ENCODE measurements at regions of chr18 and their contacts with region 1.

Region 1: GRCh38 chr18:10851824-10852319 is 297.5 kb downstream of the PIEZO2 start:
- DNase-seq: no peak
- H3K4me3 ChIP-seq: no peak overlapping the region
- H3K27ac ChIP-seq: no peak overlapping the region
- H3K4me1 ChIP-seq: no peaks in the 10 kb centered on the region
- H3K27me3 ChIP-seq: no peaks in the 10 kb centered on the region
- CTCF ChIP-seq: peak; percentile 40 to 79 (median 54)
- POLR2A ChIP-seq: no peak

Region 2: GRCh38 chr18:10682368-10682714 is 169.5 kb before region 1 on chr18:
- intact Hi-C with region 1: no loop called
- DNase-seq: no peak
- H3K4me3 ChIP-seq: no peak overlapping the region
- H3K27ac ChIP-seq: no peak overlapping the region
- H3K4me1 ChIP-seq: no peaks in the 10 kb centered on the region
- H3K27me3 ChIP-seq: no peaks in the 10 kb centered on the region
- CTCF ChIP-seq: no peak
- POLR2A ChIP-seq: no peak

Region 3: GRCh38 chr18:11040823-11041656 is 189.2 kb after region 1 on chr18:
- intact Hi-C with region 1: loop called (anchors 10 kb)
- DNase-seq: peak; percentile 79
- H3K4me3 ChIP-seq: no peak overlapping the region
- H3K27ac ChIP-seq: no peak overlapping the region
- H3K4me1 ChIP-seq: no peaks in the 10 kb centered on the region
- H3K27me3 ChIP-seq: no peaks in the 10 kb centered on the region
- CTCF ChIP-seq: peak; percentile 57 to 73 (median 62)
- POLR2A ChIP-seq: no peak

Region 4: GRCh38 chr18:11553098-11553940 is 701.4 kb after region 1 on chr18:
- intact Hi-C with region 1: loop called (anchors 10 kb)
- DNase-seq: peak; percentile 57
- H3K4me3 ChIP-seq: no peak overlapping the region
- H3K27ac ChIP-seq: no peak overlapping the region
- H3K4me1 ChIP-seq: no peaks in the 10 kb centered on the region
- H3K27me3 ChIP-seq: no peaks in the 10 kb centered on the region
- CTCF ChIP-seq: peak; percentile 42 to 73 (median 71)
- POLR2A ChIP-seq: no peak

Measured in testis (tissue), 5 donors.